BJ (cell line): ENCODE measurements at regions of chr3 and their contacts with region 1.

Region 1: GRCh38 chr3:100486808-100487207 is 5.6 kb upstream of the TMEM45A start:
- DNase-seq: no peak
- H3K4me3 ChIP-seq: no peak overlapping the region
- H3K27me3 ChIP-seq: peaks cover 2% of the 10 kb centered on the region; the same call in 1 of the 2 replicates
- CTCF ChIP-seq: no peak

Region 2: DNA sequence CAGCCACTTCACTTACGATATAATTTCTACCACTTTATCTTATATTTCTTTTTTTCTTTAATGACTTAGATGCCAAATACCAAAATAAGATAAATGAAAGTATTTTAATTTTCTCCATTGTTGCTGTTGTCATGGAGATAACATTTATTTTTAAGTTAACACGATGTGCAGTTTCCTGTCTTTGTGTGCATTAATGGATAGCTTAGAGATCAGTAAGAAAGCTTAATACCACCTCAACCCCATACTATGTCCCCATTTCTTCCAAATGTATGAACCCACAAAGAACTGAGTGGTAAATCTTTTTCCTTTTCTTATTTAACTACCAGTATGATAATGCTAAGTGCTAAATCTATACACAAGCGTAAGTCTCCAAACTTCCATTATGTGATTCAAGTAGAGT is 1104.3 kb after region 1 on chr3:
- CTCF ChIA-PET with region 1: no interaction called
- POLR2A ChIA-PET with region 1: interaction called, 28 read pairs
- DNase-seq: no peak
- H3K4me3 ChIP-seq: no peak overlapping the region
- H3K27me3 ChIP-seq: no peaks in the 10 kb centered on the region
- CTCF ChIP-seq: no peak